ENCODE measurements at regions of chr17 and their contacts with region 1.

Region 1: GRCh38 chr17:7035591-7036368 is at the start of gene SLC16A13:
- DNase-seq: peak; percentile 99
- H3K4me3 Mint-ChIP-seq: peak within 1 kb of the TSS; percentile 96
- H3K27ac Mint-ChIP-seq: peak within 1 kb of the TSS; percentile 99
- H3K4me1 Mint-ChIP-seq: peaks cover 49% of the 10 kb centered on the region
- H3K27me3 Mint-ChIP-seq: no peaks in the 10 kb centered on the region
- total RNA-seq, gene SLC16A13: 4.1 to 5.3 TPM

Region 2: DNA sequence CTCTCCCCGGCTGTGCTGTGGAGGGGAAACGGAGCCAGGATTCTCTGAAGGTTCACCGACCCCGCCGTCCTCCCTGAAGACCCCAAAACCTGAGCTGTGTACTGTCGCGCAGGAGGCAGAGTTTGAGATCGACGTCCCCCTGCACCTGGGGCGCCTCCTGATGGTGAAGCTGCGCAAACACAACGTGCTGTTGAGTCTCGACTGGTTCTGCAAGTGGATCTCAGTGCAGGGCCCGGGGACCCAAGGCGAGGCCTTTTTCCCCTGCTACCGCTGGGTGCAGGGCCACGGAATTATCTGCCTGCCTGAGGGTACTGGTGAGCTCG is 141.6 kb before region 1 on chr17:
- CTCF ChIA-PET with region 1: no interaction called
- intact Hi-C with region 1: no loop called
- DNase-seq: peak; percentile 63
- H3K4me3 Mint-ChIP-seq: no peak overlapping the region
- H3K27ac Mint-ChIP-seq: no peak overlapping the region
- H3K4me1 Mint-ChIP-seq: peaks cover 5% of the 10 kb centered on the region
- H3K27me3 Mint-ChIP-seq: peaks cover 62% of the 10 kb centered on the region

Region 3: GRCh38 chr17:7014261-7014994 is 21.4 kb before region 1 on chr17:
- CTCF ChIA-PET with region 1: no interaction called
- intact Hi-C with region 1: loop called (anchors 1 kb)
- DNase-seq: peak; percentile 98
- H3K4me3 Mint-ChIP-seq: peak overlapping the region; percentile 93
- H3K27ac Mint-ChIP-seq: peak overlapping the region; percentile 100
- H3K4me1 Mint-ChIP-seq: peaks cover 50% of the 10 kb centered on the region
- H3K27me3 Mint-ChIP-seq: no peaks in the 10 kb centered on the region

Region 4: DNA sequence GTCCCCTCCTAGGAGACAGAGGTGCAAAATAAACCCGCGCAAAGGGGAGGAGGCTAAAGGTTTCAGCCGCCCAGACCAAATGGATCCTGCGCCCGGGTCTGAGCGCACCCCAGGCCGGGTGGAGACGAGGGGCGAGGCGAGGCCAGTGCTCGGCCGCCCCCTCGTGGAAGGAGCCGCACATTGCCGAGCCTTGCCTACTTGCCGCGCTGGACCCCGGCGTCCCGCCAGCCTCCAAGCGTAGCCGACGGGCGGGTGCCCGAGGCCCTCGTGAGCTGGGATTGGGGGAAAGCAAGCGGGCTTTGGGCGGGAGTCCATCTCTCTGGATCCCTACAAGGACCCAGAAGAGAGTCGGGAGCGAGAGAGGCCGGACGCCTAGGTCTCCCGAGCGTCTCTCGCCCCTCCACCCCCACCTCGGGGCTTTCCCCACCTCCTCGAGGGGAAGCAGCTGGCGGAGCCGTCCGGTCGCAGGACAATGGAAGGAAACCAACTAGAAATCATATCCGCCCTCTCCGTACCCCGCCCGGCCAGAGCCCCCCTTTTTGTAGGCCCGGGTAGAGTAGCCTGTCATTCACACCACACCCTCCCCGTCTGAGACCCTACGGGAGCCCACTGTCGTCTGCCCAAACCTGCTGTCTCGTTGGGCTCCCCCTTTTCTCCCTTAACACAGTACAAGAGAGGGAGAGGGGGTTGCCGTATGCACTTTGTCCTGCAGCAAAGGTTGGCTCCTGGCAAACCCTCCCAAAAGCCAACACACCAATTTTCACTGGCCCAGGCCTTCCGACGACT is 13.6 kb before region 1 on chr17:
- CTCF ChIA-PET with region 1: interaction called, 37 read pairs
- intact Hi-C with region 1: loop called (anchors 1 kb)
- DNase-seq: peak; percentile 80
- H3K4me3 Mint-ChIP-seq: peak overlapping the region; percentile 59
- H3K27ac Mint-ChIP-seq: peak overlapping the region; percentile 26
- H3K4me1 Mint-ChIP-seq: peaks cover 29% of the 10 kb centered on the region
- H3K27me3 Mint-ChIP-seq: peaks cover 4% of the 10 kb centered on the region

Region 5: DNA sequence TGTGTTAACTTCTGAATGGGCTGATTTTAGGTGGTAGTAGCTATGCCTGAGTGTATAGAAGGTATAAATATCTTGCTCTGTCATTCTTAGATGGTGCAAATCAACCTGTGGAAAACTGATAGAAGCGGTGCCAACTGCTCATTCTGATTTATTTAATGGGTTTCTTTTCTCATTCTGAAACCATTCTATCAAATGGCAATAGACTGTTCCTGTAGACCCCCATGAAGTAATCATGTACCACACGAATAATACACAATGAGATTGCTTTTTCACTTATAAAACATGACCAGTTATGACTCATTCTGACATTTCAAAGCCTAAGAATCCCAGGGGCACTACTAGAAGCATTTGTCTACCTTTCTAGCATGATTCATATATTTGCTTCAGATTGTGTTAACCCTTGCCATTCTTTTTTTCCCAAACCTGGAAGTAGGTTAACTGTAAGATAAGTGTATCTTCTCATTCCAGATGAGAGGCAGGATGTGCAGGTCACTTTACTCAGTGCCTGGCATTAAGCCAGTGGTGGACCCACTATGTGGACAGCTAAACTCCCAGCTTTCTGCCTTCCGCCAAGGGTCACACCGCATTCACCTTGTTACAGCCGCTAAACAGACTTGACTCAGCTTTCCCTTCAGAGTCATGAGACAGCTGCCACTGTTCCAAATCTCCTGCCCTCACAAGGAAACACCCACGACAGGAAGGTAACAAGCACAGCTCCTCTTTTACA is 24.5 kb after region 1 on chr17:
- CTCF ChIA-PET with region 1: no interaction called
- intact Hi-C with region 1: loop called (anchors 1 kb)
- DNase-seq: peak; percentile 70
- H3K4me3 Mint-ChIP-seq: no peak overlapping the region
- H3K27ac Mint-ChIP-seq: peak overlapping the region; percentile 86
- H3K4me1 Mint-ChIP-seq: peaks cover 24% of the 10 kb centered on the region
- H3K27me3 Mint-ChIP-seq: peaks cover 2% of the 10 kb centered on the region

Measured in activated naive CD4-positive, alpha-beta T cell treated with anti-CD3 and anti-CD28 coated beads for 36 hours (primary cell).